ENCODE measurements at regions of chr3 and their contacts with region 1.

Region 1: GRCh38 chr3:132535575-132536441 is 61.3 kb upstream of the ACKR4 start:
- DNase-seq: peak; percentile 53
- ATAC-seq: peak; percentile 82
- H3K4me3 ChIP-seq: no peak overlapping the region
- H3K27ac ChIP-seq: no peak overlapping the region
- H3K4me1 ChIP-seq: no peaks in the 10 kb centered on the region
- H3K27me3 ChIP-seq: no peaks in the 10 kb centered on the region
- CTCF ChIP-seq: peak; percentile 84

Region 2: GRCh38 chr3:132445817-132446216 is 90.0 kb before region 1 on chr3:
- CTCF ChIA-PET with region 1: interaction called, 12 read pairs
- POLR2A ChIA-PET with region 1: no interaction called
- in situ Hi-C with region 1: no loop called
- intact Hi-C with region 1: no loop called
- DNase-seq: no peak
- ATAC-seq: no peak; the same call in 1 of the 2 replicates
- H3K4me3 ChIP-seq: no peak overlapping the region
- H3K27ac ChIP-seq: no peak overlapping the region
- H3K4me1 ChIP-seq: peaks cover 2% of the 10 kb centered on the region; the same call in 1 of the 2 replicates
- H3K27me3 ChIP-seq: no peaks in the 10 kb centered on the region
- CTCF ChIP-seq: no peak

Region 3: DNA sequence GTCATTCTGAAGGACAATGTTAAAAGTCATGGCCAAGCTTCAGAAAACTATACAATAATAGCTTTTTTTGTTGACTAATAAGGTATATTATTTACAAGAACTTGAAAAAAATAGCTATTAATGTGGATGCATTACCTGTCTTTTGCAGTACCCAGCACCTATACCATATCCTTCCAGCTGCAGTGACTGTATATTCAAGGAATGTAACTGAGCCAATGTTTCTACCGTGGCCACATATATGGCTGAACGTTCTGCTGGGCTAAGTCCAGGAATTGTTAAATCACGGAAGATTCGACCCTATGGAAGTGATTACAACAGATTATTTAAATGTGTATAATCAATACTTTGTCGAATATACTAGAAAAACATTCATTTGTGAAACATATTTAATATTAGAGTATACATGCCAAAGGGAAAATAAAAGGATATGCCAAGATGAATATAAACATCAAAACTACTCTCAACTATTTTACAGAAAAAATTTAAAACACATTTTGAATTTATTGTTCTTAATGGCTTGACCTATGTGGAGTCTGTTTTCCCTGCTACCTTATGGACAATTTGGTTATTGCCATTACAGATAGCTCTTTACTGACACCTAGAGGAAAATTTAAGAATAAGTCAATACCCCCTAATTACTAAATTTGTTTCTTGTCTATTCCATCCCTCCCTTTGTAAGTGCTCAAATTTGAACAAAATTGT is 106.2 kb after region 1 on chr3:
- CTCF ChIA-PET with region 1: interaction called, 13 read pairs
- POLR2A ChIA-PET with region 1: no interaction called
- in situ Hi-C with region 1: no loop called
- intact Hi-C with region 1: loop called (anchors 1 kb)
- DNase-seq: no peak
- ATAC-seq: peak; percentile 82
- H3K4me3 ChIP-seq: no peak overlapping the region
- H3K27ac ChIP-seq: no peak overlapping the region
- H3K4me1 ChIP-seq: peaks cover 2% of the 10 kb centered on the region; the same call in 1 of the 2 replicates
- H3K27me3 ChIP-seq: no peaks in the 10 kb centered on the region
- CTCF ChIP-seq: peak; percentile 80; the same call in 1 of the 2 replicates

Measured in Panc1 (cell line).